ENCODE measurements at regions of chr20 and their contacts with region 1.

Region 1: DNA sequence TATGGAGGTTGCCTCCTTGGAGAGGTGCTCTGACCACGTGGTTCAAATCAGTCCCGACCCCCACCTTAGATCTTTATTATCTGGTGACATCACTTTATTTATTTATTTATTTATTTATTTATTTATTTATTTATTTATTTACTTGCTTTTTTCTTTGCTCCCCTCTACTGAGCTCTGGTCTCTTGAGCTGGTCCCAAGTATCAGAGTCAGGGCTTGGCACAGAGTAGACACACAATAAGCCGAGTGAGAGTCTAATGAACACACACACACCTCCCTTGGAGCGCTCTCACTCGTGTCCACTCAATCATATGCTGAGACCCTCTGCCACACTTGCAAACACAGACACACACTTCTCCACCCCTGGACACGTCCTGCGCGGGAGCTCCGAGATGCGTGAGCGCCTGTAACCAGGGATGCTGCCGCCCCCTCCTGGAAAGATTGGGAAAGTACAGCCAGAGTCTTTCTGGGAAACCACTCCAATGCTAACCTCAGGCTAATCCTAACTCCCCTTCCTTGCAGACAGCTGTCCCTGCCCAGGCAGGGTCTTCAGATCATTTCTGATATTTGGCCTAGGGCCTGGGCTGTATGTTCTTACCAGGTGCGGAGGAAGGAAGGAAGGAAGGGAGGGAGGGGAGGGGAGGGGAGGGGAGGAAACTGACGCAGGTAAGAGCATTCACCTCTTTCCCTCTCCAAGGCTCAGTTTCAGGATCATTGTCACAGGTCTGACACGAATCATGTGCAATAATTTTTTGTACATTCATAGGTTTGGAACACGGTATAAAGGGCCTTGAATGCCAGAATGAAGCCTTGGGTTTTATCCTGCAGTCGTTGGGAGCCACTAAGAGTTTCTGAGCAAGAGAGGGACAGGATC is 70.9 kb downstream of the STK35 start:
- DNase-seq: peak; percentile 36
- ATAC-seq: peak; percentile 94
- H3K4me3 ChIP-seq: peak overlapping the region in 1 of 2 experiments; percentile 16; a peak in 1 of 4 replicates
- H3K27ac ChIP-seq: no peak overlapping the region
- H3K4me1 ChIP-seq: peaks cover 0 to 2% of the 10 kb centered on the region in 2 experiments; a peak in 1 of 4 replicates
- H3K27me3 ChIP-seq: peaks cover 18% of the 10 kb centered on the region; the same call in 1 of the 2 replicates
- CTCF ChIP-seq: peak; percentile 81 to 91 (median 88)
- POLR2A ChIP-seq: no peak
- RAD21 ChIP-seq: peak; percentile 93

Region 2: DNA sequence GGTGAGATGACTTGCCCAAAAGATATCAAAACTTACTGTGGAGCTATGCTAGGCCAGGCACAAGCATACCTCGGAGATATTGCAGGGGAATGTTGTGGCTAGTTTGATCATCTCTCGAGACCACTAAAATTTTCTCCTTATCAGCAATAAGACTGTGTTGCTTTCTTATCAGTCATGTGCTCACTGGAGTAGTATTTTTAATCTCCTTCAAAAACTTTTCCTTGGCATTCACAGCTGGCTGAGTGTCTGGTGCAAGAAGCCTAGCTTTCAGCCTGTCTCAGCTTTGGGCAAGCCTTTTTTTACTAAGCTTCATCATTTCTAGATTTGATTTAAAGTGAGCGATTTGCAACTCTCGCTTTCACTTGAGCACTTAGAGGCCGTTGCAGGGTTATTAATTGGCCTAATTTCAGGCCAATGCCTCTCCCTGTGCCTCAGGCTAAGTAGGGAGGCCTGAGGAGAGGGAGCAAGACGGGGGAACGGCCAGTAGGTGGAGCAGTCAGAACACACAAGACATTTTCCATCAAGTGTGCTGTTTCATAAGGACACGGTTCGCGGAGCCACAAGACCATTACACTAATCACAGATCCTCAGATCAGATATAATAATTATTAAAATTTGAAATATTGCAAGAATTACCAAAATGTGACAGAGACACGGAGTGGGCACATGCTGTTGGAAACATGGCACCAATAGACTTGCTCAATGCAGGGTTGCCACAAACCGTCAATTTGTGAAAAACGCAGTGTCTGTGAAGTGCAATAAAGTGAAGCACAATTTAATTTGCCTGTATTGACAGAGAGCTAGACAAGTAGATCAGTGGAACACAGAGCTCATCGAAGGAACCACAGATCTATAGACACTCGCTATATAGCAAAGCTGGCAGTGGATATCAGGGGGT is 408.2 kb before region 1 on chr20:
- CTCF ChIA-PET with region 1: interaction called, 11 read pairs
- POLR2A ChIA-PET with region 1: no interaction called
- RAD21 ChIA-PET with region 1: no interaction called
- intact Hi-C with region 1: loop called (anchors 1 kb)
- DNase-seq: peak; percentile 78
- ATAC-seq: peak; percentile 97
- H3K4me3 ChIP-seq: no peak overlapping the region
- H3K27ac ChIP-seq: no peak overlapping the region
- H3K4me1 ChIP-seq: peaks cover 0 to 19% of the 10 kb centered on the region in 2 experiments; a peak in 2 of 4 replicates
- H3K27me3 ChIP-seq: no peaks in the 10 kb centered on the region
- CTCF ChIP-seq: peak; percentile 63 to 89 (median 79); a peak in 5 of 6 replicates
- POLR2A ChIP-seq: no peak
- RAD21 ChIP-seq: peak; percentile 79

Region 3: GRCh38 chr20:1965520-1966351 is 206.8 kb before region 1 on chr20:
- CTCF ChIA-PET with region 1: interaction called, 46 read pairs
- POLR2A ChIA-PET with region 1: no interaction called
- RAD21 ChIA-PET with region 1: interaction called in 1 of 2 experiments, 3 read pairs
- intact Hi-C with region 1: loop called (anchors 1 kb)
- DNase-seq: peak; percentile 62
- ATAC-seq: peak; percentile 97
- H3K4me3 ChIP-seq: no peak overlapping the region
- H3K27ac ChIP-seq: no peak overlapping the region
- H3K4me1 ChIP-seq: peaks cover 0 to 6% of the 10 kb centered on the region in 2 experiments; a peak in 2 of 4 replicates
- H3K27me3 ChIP-seq: no peaks in the 10 kb centered on the region; the same call in 1 of the 2 replicates
- CTCF ChIP-seq: peak; percentile 88 to 96 (median 92)
- POLR2A ChIP-seq: no peak
- RAD21 ChIP-seq: peak; percentile 90

Region 4: DNA sequence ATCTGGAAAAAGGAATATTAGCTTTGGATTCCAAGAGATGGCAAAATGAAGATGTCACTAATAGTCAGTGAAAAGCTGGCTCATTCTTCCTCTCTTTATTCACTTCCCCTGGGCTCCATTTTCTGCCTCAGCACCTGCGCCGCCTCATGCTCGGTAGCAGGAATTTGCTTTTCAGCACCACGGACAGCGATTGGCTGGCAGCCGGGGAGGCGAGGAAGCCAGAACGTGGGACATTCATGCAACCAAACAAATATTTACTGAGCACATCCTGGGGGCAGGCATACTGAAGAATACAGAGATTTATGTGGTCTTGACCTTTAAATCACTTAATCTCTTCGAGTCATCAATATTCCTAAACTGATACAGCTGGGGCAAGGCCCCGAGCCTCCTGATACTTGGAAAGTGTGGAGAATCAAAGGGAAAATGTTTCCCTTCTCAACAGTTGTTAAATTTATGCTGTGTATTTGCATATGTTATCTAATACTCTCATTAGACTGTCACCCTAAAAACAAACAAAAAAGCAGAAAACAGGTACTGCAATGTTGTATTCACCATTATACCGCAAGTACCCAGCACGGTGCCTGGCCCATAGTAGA is 166.6 kb before region 1 on chr20:
- CTCF ChIA-PET with region 1: interaction called, 22 read pairs
- POLR2A ChIA-PET with region 1: no interaction called
- RAD21 ChIA-PET with region 1: interaction called, 8 to 12 read pairs
- intact Hi-C with region 1: loop called (anchors 1 kb)
- DNase-seq: peak; percentile 15
- ATAC-seq: no peak
- H3K4me3 ChIP-seq: no peak overlapping the region
- H3K27ac ChIP-seq: no peak overlapping the region
- H3K4me1 ChIP-seq: no peaks in the 10 kb centered on the region
- H3K27me3 ChIP-seq: peaks cover 69% of the 10 kb centered on the region
- CTCF ChIP-seq: no peak
- POLR2A ChIP-seq: no peak
- RAD21 ChIP-seq: no peak

Region 5: GRCh38 chr20:2065099-2065498 is 107.4 kb before region 1 on chr20:
- CTCF ChIA-PET with region 1: no interaction called
- POLR2A ChIA-PET with region 1: no interaction called
- RAD21 ChIA-PET with region 1: no interaction called
- intact Hi-C with region 1: no loop called
- DNase-seq: no peak
- ATAC-seq: no peak
- H3K4me3 ChIP-seq: no peak overlapping the region
- H3K27ac ChIP-seq: no peak overlapping the region
- H3K4me1 ChIP-seq: no peaks in the 10 kb centered on the region
- H3K27me3 ChIP-seq: peaks cover 48% of the 10 kb centered on the region
- CTCF ChIP-seq: no peak
- POLR2A ChIP-seq: no peak
- RAD21 ChIP-seq: no peak

Region 6: DNA sequence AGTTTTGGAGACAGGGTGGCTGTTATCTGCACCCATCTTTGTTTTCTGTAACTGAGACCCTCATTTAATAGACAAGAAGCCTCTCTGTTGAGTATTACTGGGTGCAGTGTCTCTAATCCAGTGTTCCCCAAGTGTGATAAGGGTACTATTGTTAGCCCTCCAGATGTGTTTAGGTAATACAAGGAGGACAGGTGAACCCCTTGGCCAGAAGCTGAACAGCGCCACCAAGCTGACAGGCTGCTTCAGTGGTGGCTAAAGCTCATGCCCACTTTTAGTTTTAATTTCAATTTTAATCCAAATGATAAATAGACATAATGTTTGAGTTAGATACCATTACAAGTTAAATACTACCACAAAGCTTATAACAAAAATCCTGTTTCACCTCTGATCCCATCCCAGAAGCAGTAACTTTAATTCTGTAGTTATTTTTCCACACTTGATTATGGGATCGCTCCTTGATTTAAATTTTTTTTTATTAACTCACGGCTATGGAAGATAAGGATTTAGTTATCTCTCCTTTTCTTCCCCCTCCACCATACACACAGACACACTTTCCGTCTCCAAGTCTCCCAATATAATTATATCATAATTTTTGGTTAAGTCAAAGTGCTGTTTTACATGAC is 79.3 kb before region 1 on chr20:
- CTCF ChIA-PET with region 1: interaction called, 20 read pairs
- POLR2A ChIA-PET with region 1: no interaction called
- RAD21 ChIA-PET with region 1: interaction called in 1 of 2 experiments, 4 read pairs
- intact Hi-C with region 1: no loop called
- DNase-seq: peak; percentile 46
- ATAC-seq: peak; percentile 97
- H3K4me3 ChIP-seq: no peak overlapping the region
- H3K27ac ChIP-seq: no peak overlapping the region
- H3K4me1 ChIP-seq: no peaks in the 10 kb centered on the region
- H3K27me3 ChIP-seq: peaks cover 37% of the 10 kb centered on the region
- CTCF ChIP-seq: peak; percentile 74 to 95 (median 94)
- POLR2A ChIP-seq: no peak
- RAD21 ChIP-seq: peak; percentile 81

Region 7: DNA sequence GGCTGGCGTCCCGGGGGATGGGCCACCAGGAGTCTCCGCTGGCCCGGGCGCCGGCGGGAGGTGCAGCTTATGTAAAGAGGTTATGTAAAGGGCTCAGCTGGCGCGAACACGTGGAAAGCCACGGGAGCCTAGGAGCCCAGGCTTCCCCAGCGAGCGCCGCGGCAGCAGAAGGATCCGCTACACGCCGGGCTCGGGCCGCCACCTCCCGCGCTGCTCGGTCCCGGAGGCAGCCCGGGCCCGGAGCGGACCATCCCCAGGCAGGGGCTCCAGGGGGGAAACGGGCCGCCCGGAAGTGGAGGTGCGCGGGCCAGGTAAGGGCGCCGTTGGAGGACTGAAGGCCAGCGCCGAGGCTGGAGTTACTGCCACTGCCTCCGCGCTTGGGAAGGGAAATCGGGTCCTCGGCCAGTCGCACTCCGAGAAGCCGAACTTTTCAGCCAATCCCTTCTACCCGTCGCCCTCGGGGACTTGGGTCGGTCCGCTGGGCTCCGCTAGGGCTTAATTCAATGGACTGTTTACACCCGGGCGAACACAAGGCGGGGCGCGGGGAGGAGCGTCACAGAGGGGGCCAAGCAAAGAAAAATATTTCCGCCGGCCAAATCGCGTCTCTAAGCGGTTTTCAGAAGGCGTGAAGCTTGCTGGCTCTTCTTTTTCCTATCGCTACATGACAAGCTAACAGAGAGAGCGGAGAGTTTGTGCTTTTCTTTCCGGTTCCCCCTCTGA is 70.5 kb before region 1 on chr20:
- CTCF ChIA-PET with region 1: interaction called, 5 read pairs
- POLR2A ChIA-PET with region 1: no interaction called
- RAD21 ChIA-PET with region 1: interaction called in 1 of 2 experiments, 4 read pairs
- intact Hi-C with region 1: loop called (anchors 5 kb)
- DNase-seq: peak; percentile 91
- ATAC-seq: peak; percentile 83
- H3K4me3 ChIP-seq: peak overlapping the region; percentile 84 to 97
- H3K27ac ChIP-seq: peak overlapping the region; percentile 95
- H3K4me1 ChIP-seq: peaks cover 15 to 24% of the 10 kb centered on the region in 2 experiments
- H3K27me3 ChIP-seq: no peaks in the 10 kb centered on the region
- CTCF ChIP-seq: no peak
- POLR2A ChIP-seq: peak; percentile 85
- RAD21 ChIP-seq: no peak

Region 8: DNA sequence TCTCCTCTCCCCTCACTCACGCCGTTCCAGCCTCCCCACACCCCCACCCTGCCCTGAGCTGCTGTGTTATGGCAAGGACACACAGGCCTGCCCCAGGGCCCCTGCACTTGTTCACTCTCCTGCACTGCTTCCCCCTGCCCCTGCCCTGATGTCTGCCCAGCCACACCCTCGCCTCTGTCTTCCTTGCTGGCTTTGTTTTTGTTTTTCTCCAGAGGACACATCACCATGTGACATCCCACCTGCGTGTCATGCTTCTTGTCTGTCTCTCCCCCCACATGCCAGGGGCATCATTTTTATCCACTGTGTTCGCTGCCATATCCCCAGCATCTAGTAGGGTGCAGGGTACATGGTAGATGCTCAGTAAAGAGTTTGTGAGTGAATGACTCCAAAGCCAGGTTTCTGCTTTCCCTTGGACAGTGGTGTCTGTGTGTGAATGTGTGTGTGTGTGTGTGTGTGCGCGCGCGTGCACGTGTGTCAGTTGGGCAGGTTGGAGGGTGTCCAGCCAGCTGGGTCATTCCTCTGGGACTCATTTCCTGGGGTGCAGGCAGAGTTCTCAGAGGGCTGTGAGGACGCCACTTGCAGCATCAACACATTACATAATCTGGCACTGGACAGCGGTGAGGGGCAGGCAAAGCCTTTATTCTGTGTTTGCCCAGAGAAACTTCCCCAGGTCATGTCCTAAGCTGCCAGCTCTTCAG is 10.3 kb before region 1 on chr20:
- CTCF ChIA-PET with region 1: interaction called, 11 read pairs
- POLR2A ChIA-PET with region 1: no interaction called
- RAD21 ChIA-PET with region 1: no interaction called
- intact Hi-C with region 1: no loop called
- DNase-seq: no peak
- ATAC-seq: no peak
- H3K4me3 ChIP-seq: no peak overlapping the region
- H3K27ac ChIP-seq: no peak overlapping the region
- H3K4me1 ChIP-seq: peaks cover 0 to 2% of the 10 kb centered on the region in 2 experiments; a peak in 1 of 4 replicates
- H3K27me3 ChIP-seq: 0 out of 2 replicates have a peak, but pooled peaks cover 3% of the 10 kb centered on the region
- CTCF ChIP-seq: no peak
- POLR2A ChIP-seq: no peak
- RAD21 ChIP-seq: no peak